Activated CD4-positive, alpha-beta T cell treated with anti-CD3 and anti-CD28 coated beads for 36 hours (primary cell): ENCODE measurements at regions of chr2 and their contacts with region 1.

Region 1: DNA sequence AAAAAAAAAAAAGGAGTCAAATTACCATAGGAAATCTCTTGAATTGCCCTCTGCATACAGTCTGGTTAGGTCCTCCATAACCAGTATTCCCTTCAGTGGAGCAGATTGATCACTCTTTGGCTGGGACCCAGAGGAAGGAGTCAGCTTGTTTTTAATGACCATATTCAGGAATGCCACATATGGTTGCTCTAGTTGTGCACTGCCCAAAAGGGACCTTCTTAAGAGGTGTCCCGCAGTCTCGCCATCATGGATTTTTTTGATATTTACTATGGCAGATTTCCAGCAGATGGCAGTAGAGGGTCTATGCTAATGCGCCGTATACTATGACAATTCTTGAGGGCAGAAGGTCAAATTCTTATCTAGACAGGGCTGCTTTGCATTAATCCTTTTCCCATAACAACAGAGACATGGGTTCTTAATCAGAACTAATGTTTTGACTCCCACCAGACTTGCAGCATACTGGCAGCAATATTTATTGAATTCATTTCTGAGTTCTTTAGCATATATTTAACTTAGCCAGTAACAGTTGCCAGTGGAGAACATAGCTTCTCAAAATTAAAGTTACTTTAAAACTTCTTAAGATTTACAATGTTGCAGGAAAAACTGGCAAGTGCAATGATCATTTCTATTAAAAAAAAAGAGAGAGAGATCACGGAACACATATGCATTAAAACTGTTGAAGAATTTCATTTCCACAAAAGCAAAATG is 31.8 kb upstream of the INPP4A start:
- DNase-seq: peak; percentile 62
- ATAC-seq: peak; percentile 85
- H3K4me3 Mint-ChIP-seq: no peak overlapping the region
- H3K27ac Mint-ChIP-seq: no peak overlapping the region
- H3K4me1 Mint-ChIP-seq: peaks cover 14% of the 10 kb centered on the region
- H3K27me3 Mint-ChIP-seq: no peaks in the 10 kb centered on the region

Region 2: DNA sequence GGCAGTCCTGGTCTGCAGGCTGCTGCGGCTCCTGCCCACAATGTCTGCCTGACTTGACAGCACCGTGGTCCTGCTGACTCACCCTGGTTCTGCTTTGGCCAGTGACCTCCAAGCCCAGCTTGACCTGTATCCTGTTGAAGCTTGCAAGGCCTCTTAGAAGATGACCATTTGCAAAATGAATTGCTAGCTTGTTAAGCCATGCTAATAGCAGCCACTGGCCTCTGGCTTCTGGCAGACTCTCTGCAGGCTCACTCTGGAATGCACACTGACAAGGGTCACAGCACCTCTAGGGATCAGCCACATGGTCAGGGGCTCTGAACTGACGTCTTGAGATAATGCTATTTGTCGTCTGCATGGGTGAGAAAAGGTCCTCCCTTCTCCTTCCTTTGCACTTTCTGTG is 40.8 kb before region 1 on chr2:
- CTCF ChIA-PET with region 1: no interaction called
- POLR2A ChIA-PET with region 1: no interaction called
- intact Hi-C with region 1: no loop called
- DNase-seq: no peak
- ATAC-seq: no peak
- H3K4me3 Mint-ChIP-seq: no peak overlapping the region
- H3K27ac Mint-ChIP-seq: no peak overlapping the region
- H3K4me1 Mint-ChIP-seq: no peaks in the 10 kb centered on the region
- H3K27me3 Mint-ChIP-seq: peaks cover 17% of the 10 kb centered on the region

Region 3: GRCh38 chr2:98426771-98427170 is 13.9 kb after region 1 on chr2:
- CTCF ChIA-PET with region 1: interaction called, 10 read pairs
- POLR2A ChIA-PET with region 1: no interaction called
- intact Hi-C with region 1: no loop called
- DNase-seq: no peak
- ATAC-seq: no peak
- H3K4me3 Mint-ChIP-seq: no peak overlapping the region
- H3K27ac Mint-ChIP-seq: no peak overlapping the region
- H3K4me1 Mint-ChIP-seq: no peaks in the 10 kb centered on the region
- H3K27me3 Mint-ChIP-seq: no peaks in the 10 kb centered on the region

Region 4: GRCh38 chr2:98479959-98480524 is 67.1 kb after region 1 on chr2:
- CTCF ChIA-PET with region 1: interaction called, 4 read pairs
- POLR2A ChIA-PET with region 1: no interaction called
- intact Hi-C with region 1: loop called (anchors 2 to 5 kb)
- DNase-seq: peak; percentile 78
- ATAC-seq: peak; percentile 77
- H3K4me3 Mint-ChIP-seq: peak overlapping the region; percentile 6
- H3K27ac Mint-ChIP-seq: peak overlapping the region; percentile 85
- H3K4me1 Mint-ChIP-seq: peaks cover 98% of the 10 kb centered on the region
- H3K27me3 Mint-ChIP-seq: no peaks in the 10 kb centered on the region

Region 5: GRCh38 chr2:98601532-98602132 is 188.7 kb after region 1 on chr2:
- CTCF ChIA-PET with region 1: interaction called, 3 read pairs
- POLR2A ChIA-PET with region 1: no interaction called
- intact Hi-C with region 1: loop called (anchors 2 kb)
- DNase-seq: peak; percentile 39
- ATAC-seq: peak; percentile 69
- H3K4me3 Mint-ChIP-seq: no peak overlapping the region
- H3K27ac Mint-ChIP-seq: no peak overlapping the region
- H3K4me1 Mint-ChIP-seq: peaks cover 30% of the 10 kb centered on the region
- H3K27me3 Mint-ChIP-seq: no peaks in the 10 kb centered on the region

Region 6: DNA sequence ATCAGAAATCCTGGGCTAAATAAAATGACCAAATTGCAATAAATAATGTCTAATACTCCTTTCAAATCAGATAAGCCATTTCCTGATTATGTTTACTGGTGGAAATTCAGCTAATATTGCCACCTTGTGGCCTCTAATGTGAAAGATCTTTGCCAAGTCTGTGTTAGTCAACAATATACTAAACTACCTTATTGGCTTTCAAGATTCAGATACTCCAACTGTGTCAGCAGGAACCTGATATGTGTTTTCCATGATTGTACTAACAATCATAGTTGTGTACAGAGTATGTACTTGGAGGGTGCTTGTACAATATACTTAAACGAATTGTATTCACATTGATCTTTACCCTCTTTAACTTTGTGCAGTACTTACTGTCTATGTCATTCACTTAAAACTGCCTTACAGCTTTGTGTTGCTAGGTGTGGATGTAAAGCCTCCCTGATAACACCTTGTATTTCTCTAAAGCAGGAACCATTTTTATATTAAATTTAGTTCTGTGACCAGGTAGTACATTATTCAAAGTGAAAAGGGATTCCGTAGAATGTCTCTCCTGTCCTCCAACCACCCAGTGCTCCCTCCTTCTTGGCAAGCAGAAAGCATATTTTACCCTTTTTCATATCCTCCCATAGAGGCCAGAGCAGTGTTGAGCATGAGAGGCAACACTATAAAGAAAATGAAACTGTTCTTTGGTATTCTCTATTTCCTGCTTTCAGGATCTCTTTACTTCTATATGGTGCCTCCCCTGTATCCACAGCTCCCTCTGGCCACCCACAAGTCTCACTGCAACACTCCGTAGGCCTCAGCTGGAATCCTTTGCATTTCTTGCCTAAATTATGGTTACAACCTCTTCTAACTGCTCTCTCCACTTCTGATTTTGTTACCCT is 653.4 kb after region 1 on chr2:
- CTCF ChIA-PET with region 1: no interaction called
- POLR2A ChIA-PET with region 1: no interaction called
- intact Hi-C with region 1: loop called in 1 of 2 experiments (anchors 10 kb)
- DNase-seq: peak; percentile 46
- ATAC-seq: peak; percentile 98
- H3K4me3 Mint-ChIP-seq: no peak overlapping the region
- H3K27ac Mint-ChIP-seq: no peak overlapping the region
- H3K4me1 Mint-ChIP-seq: no peaks in the 10 kb centered on the region
- H3K27me3 Mint-ChIP-seq: no peaks in the 10 kb centered on the region